Calu3 (cell line): ENCODE measurements at regions of chr2 and their contacts with region 1.

Region 1: DNA sequence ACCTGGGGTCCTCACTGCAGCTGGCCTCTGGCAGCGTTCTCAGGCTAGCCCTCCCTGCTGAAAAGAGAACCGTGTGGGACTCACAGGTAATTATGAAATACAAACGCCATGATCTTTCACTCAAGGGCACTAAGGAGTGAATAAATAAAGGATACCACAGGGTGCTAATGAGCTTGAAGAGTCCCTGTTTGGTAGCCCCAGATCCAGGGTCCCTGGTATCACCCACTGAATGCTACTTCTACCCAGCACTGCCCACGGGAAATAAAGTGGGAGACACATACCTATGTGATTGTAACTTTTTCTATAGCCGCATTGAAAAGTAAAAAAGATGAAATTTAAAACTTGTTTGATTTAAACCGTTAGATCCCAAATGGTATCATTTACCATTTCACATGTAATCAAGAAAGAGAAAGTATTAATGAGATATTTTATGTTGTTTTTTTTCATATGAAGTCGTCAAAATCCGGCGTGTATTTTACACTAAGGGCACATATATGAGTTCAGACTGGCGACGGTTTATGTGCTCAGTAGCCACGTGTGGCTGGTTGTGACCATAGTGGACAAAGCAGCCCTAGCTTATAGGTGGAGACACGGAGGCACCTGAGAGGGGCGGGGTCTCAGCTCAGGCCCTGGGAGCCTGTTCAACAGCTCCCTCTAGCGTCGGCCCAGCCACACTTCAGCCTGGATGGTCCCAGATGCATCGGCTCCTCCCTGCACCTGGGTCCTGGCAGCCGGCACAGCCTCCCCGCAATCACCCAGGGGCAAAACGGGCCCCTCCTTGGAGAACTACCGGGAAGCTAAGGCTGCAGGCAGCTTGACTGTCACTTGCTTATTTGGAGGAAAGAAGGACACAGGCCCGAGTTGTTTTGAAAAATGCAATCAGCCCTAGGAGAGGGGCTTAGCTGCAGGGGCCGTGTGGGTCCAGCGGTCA is 39.2 kb downstream of the ODC1 start:
- DNase-seq: peak; percentile 91
- H3K4me3 Mint-ChIP-seq: peak overlapping the region; percentile 61
- H3K27ac Mint-ChIP-seq: peak overlapping the region; percentile 91
- H3K4me1 Mint-ChIP-seq: peaks cover 60% of the 10 kb centered on the region
- H3K27me3 Mint-ChIP-seq: no peaks in the 10 kb centered on the region
- CTCF ChIP-seq: peak; percentile 93

Region 2: GRCh38 chr2:9681427-9681817 is 727.5 kb before region 1 on chr2:
- CTCF ChIA-PET with region 1: no interaction called
- intact Hi-C with region 1: no loop called
- DNase-seq: no peak
- H3K4me3 Mint-ChIP-seq: no peak overlapping the region
- H3K27ac Mint-ChIP-seq: no peak overlapping the region
- H3K4me1 Mint-ChIP-seq: peaks cover under 1% of the 10 kb centered on the region
- H3K27me3 Mint-ChIP-seq: no peaks in the 10 kb centered on the region
- CTCF ChIP-seq: no peak

Region 3: DNA sequence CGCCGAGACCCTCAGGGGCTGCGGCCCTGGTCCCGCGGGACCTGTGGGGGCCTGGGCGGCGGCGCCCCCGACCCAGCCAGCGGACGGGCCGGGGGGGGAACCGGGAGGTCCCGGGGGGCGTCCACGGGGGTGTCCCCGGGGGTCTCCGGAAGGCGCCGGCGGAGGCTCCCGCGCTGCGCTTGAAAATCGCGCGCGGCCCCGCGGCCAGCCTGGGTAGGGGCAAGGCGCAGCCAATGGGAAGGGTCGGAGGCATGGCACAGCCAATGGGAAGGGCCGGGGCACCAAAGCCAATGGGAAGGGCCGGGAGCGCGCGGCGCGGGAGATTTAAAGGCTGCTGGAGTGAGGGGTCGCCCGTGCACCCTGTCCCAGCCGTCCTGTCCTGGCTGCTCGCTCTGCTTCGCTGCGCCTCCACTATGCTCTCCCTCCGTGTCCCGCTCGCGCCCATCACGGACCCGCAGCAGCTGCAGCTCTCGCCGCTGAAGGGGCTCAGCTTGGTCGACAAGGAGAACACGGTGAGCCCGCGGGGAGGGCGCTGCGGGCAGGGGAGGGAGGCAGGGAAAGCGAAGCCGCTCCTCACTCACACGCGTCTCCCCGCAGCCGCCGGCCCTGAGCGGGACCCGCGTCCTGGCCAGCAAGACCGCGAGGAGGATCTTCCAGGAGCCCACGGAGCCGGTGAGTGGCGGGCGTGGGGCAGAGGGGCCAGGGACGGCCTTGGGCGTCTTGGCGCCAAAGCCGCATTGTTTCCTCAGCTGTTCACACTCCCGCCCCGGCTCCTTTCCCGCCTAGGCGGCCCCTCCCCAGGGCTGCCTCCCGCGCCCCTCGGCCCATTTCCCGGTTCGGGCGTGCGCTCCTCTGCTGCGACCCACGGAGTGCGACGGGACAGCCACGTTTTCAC is 286.3 kb before region 1 on chr2 and contains the start of gene RRM2:
- CTCF ChIA-PET with region 1: interaction called, 18 read pairs
- intact Hi-C with region 1: loop called (anchors 5 kb)
- DNase-seq: peak; percentile 96
- H3K4me3 Mint-ChIP-seq: peak within 1 kb of the TSS; percentile 88
- H3K27ac Mint-ChIP-seq: peak within 1 kb of the TSS; percentile 92
- H3K4me1 Mint-ChIP-seq: peaks cover 26% of the 10 kb centered on the region
- H3K27me3 Mint-ChIP-seq: no peaks in the 10 kb centered on the region
- CTCF ChIP-seq: no peak
- total RNA-seq, gene RRM2: 154 and 168 TPM in 2 replicates

Region 4: DNA sequence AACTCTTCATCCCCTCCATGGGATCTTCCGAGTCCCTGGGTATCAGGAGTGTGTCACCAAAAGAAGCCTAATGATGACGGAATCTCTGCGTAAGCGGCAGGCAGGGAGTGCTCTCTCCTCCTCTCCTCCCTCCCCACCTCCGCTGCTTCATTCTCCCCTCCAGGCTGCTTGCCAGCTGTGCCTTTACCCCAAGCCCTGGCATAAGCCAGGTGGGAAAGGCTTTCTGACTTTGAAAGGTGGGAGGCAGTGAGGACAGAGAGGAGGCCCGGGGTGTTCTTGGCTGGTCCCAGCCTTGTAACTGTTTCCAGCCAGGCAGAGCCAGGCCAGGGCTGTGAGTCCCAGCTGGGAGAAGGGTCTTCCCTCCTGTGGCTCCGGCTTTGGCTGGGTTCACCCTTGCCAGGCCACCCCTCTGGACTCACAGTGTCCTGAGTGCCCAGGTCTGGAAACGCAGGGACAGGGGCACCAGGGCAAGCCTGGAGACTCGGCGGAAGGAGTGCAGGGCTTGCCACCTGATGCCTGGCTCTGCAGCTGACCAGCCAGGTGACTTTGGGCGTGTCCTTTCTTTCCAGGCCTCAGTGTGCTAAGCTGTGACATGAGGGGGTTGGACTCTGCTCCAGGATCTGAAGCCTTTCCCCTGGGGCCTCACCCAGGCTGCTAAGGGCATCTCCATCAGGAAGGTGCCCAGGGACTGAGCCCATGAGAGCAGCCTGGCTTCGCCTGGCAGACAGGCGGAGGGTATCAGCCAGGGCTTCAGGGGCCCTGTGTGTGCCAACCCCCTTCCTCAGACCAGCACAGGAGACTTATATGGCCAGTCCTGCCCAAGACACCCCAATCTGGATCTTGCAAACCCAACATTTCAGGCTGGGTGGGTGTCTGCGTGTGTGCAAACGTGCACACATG is 139.0 kb before region 1 on chr2:
- CTCF ChIA-PET with region 1: interaction called, 33 read pairs
- intact Hi-C with region 1: loop called (anchors 1 kb)
- DNase-seq: no peak
- H3K4me3 Mint-ChIP-seq: no peak overlapping the region
- H3K27ac Mint-ChIP-seq: no peak overlapping the region
- H3K4me1 Mint-ChIP-seq: peaks cover 8% of the 10 kb centered on the region
- H3K27me3 Mint-ChIP-seq: no peaks in the 10 kb centered on the region
- CTCF ChIP-seq: no peak

Region 5: DNA sequence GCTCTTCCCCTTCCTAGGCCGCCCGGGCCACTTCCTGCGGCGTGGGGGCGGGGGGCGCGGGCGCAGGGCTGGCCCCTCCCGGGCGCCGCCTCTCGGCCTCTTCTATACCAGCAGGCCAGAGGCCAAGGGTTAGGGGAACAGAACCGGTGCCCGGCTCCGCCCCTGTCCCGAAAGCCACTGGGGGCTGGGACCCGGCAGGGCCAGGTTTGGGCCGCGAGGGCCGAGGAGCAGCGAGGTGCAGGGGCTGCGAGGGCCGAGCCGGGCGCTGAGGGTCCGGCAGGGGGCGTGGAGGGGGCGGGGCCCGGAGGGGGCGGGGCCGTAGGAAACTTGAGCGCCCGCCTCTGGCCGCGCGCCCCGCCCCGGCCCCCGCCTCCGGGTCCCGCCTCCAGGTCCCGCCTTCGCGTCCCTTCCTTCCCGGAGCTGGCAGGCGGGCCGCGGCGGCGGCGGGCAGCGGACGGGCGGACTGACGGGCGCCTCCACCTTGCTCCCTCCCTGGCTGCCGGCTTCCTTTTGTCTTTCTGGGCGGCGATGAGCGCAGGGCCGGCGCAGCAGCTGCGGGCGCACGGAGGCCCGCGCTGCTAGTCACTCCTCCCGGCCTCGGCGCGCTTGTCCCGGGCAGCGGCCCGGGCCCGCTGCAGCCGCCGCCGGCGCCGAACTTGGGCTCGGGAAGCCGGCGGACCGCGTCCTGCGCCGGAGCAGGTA is 106.3 kb before region 1 on chr2 and contains the start of gene HPCAL1:
- CTCF ChIA-PET with region 1: interaction called, 41 read pairs
- intact Hi-C with region 1: loop called (anchors 5 kb)
- DNase-seq: peak; percentile 91
- H3K4me3 Mint-ChIP-seq: peak within 1 kb of the TSS; percentile 100
- H3K27ac Mint-ChIP-seq: no peak within 1 kb of the TSS
- H3K4me1 Mint-ChIP-seq: peaks cover 42% of the 10 kb centered on the region
- H3K27me3 Mint-ChIP-seq: no peaks in the 10 kb centered on the region
- CTCF ChIP-seq: peak; percentile 76
- total RNA-seq, gene HPCAL1: 34.0 and 35.1 TPM in 2 replicates

Region 6: GRCh38 chr2:10355471-10356458 is 53.1 kb before region 1 on chr2:
- CTCF ChIA-PET with region 1: interaction called, 21 read pairs
- intact Hi-C with region 1: loop called (anchors 1 kb)
- DNase-seq: peak; percentile 64
- H3K4me3 Mint-ChIP-seq: peak overlapping the region; percentile 51
- H3K27ac Mint-ChIP-seq: peak overlapping the region; percentile 46
- H3K4me1 Mint-ChIP-seq: peaks cover 42% of the 10 kb centered on the region
- H3K27me3 Mint-ChIP-seq: no peaks in the 10 kb centered on the region
- CTCF ChIP-seq: no peak

Region 7: GRCh38 chr2:10385933-10386773 is 22.8 kb before region 1 on chr2:
- CTCF ChIA-PET with region 1: interaction called, 16 read pairs
- intact Hi-C with region 1: no loop called
- DNase-seq: peak; percentile 27
- H3K4me3 Mint-ChIP-seq: peak overlapping the region; percentile 50
- H3K27ac Mint-ChIP-seq: peak overlapping the region; percentile 58
- H3K4me1 Mint-ChIP-seq: peaks cover 50% of the 10 kb centered on the region
- H3K27me3 Mint-ChIP-seq: no peaks in the 10 kb centered on the region
- CTCF ChIP-seq: no peak

Region 8: GRCh38 chr2:10434886-10435819 is 26.2 kb after region 1 on chr2:
- CTCF ChIA-PET with region 1: interaction called, 30 read pairs
- intact Hi-C with region 1: no loop called
- DNase-seq: peak; percentile 86
- H3K4me3 Mint-ChIP-seq: no peak overlapping the region
- H3K27ac Mint-ChIP-seq: no peak overlapping the region
- H3K4me1 Mint-ChIP-seq: peaks cover 18% of the 10 kb centered on the region
- H3K27me3 Mint-ChIP-seq: no peaks in the 10 kb centered on the region
- CTCF ChIP-seq: peak; percentile 95